ENCODE measurements at regions of chr7 and their contacts with region 1.

Region 1: GRCh38 chr7:7103343-7104313 is 78.7 kb upstream of the C1GALT1 start:
- DNase-seq: no peak
- ATAC-seq: peak in 3 of 4 donors; percentile 53 to 66 (median 60)
- H3K4me3 ChIP-seq: peak overlapping the region in 2 of 12 donors; percentile 19 to 40
- H3K27ac ChIP-seq: peak overlapping the region in 1 of 12 donors; percentile 10
- H3K4me1 ChIP-seq: peaks cover 0 to 22% (median 14%) of the 10 kb centered on the region in 12 donors
- H3K27me3 ChIP-seq: no peaks in the 10 kb centered on the region
- CTCF ChIP-seq: peak; percentile 59 to 77 (median 70)
- POLR2A ChIP-seq: no peak

Region 2: DNA sequence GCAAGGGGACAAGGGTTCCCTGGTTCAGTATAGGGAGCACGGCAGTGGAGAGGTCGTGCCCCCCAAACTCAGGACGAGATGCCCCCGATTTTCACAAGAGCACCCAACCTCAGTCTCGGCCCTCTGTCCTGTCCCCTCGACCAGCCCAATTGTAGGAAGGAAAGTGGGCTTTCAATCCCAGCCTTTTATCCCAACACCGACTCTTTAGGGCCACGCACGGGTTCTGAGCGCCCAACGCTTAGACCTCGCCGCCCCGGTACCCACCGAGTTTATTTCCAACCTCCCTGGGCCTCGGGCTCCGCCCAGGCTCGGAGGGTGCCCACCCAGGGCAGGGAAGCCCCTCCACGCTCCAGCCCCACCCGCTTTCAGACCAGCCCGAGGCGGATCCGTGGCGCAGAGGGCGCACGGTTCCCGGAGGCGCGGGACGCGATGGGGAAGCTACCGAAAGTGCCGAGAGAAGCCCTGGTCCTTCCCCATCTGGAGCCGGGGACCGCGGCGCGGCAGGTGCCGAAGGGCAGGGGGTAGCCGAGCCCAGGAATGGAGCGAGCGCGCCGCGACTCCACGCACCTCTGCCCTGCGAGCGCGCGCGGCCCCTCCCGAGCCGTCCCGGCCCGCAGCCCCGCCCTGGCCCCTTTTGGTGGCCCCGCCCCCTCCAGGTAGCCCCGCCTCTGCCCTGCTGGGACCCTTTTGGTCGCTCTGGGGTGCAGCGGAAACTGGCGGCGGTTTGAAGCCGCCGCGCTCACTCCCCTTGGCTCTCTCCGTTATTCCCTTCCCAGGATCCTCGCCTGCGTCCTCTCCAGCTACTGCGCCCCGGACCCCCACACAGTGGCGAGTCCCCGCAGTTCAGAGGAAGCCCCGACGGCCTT is 572.8 kb before region 1 on chr7:
- intact Hi-C with region 1: no loop called
- DNase-seq: no peak
- ATAC-seq: peak in 1 of 4 donors; percentile 14
- H3K4me3 ChIP-seq: peak overlapping the region in 9 of 12 donors; percentile 21 to 43 (median 32)
- H3K27ac ChIP-seq: no peak overlapping the region
- H3K4me1 ChIP-seq: peaks cover 0 to 21% (median 0%) of the 10 kb centered on the region in 12 donors
- H3K27me3 ChIP-seq: peaks cover 19 to 77% (median 53%) of the 10 kb centered on the region in 9 donors
- CTCF ChIP-seq: no peak
- POLR2A ChIP-seq: no peak

Region 3: GRCh38 chr7:7176421-7177043 is 72.9 kb after region 1 on chr7:
- intact Hi-C with region 1: loop called in 5 of 10 experiments (anchors 5 to 10 kb)
- DNase-seq: no peak
- ATAC-seq: peak in 3 of 4 donors; percentile 71 to 79 (median 71)
- H3K4me3 ChIP-seq: no peak overlapping the region
- H3K27ac ChIP-seq: peak overlapping the region in 1 of 12 donors; percentile 53
- H3K4me1 ChIP-seq: peaks cover 0 to 23% (median 4%) of the 10 kb centered on the region in 12 donors
- H3K27me3 ChIP-seq: no peaks in the 10 kb centered on the region
- CTCF ChIP-seq: no peak
- POLR2A ChIP-seq: no peak

Region 4: DNA sequence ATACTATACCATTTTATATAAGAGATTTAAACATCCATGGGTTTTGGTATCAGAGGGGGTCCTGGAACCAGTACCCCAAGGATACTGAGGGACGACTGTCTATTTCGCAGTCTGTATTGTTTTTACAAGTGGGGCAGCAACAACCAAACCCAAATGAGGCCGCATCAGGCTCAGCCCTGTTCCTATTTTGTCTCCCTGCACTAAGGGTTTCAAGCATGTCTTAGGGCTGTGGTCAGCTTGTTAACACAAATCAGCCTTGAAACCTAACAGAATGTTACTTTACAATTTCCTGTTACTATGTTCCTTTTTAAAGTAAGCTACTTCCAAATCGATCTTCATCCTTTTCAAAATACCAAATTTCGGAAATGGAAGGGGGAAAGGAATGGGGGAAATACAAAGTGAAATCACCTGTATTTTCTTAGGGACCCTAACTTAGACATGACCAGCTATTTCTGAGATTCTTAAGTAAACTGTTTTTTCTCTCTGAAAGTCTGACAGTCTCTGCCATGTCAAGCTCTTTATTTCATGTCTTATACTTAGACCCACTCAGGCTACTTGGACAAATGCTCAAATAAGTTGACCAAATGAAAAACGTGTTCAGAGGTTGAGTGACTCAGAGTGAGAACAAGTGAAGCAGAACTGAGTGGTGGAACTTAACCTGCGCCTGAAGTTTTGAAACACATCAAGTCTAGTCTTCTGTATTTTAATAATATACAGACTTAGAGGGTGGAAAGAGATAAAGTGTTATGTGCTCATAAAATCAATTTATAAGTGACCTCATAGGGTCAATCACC is 154.5 kb after region 1 on chr7:
- intact Hi-C with region 1: loop called in 1 of 10 experiments (anchors 5 kb)
- DNase-seq: no peak
- ATAC-seq: peak in 1 of 4 donors; percentile 37
- H3K4me3 ChIP-seq: peak overlapping the region in 1 of 12 donors; percentile 45
- H3K27ac ChIP-seq: peak overlapping the region in 1 of 12 donors; percentile 87
- H3K4me1 ChIP-seq: peaks cover 0 to 39% (median 5%) of the 10 kb centered on the region in 12 donors
- H3K27me3 ChIP-seq: no peaks in the 10 kb centered on the region
- CTCF ChIP-seq: no peak
- POLR2A ChIP-seq: no peak

Region 5: GRCh38 chr7:7424151-7424873 is 320.7 kb after region 1 on chr7:
- intact Hi-C with region 1: loop called in 7 of 10 experiments (anchors 5 to 10 kb)
- DNase-seq: peak; percentile 41 to 58 (median 55)
- ATAC-seq: peak; percentile 58 to 94 (median 86)
- H3K4me3 ChIP-seq: peak overlapping the region; percentile 14 to 65 (median 50)
- H3K27ac ChIP-seq: peak overlapping the region in 1 of 12 donors; percentile 11
- H3K4me1 ChIP-seq: peaks cover 0 to 11% (median 0%) of the 10 kb centered on the region in 12 donors
- H3K27me3 ChIP-seq: no peaks in the 10 kb centered on the region
- CTCF ChIP-seq: peak; percentile 52 to 82 (median 70)
- POLR2A ChIP-seq: no peak

Region 6: GRCh38 chr7:7542251-7542835 is 438.7 kb after region 1 on chr7:
- intact Hi-C with region 1: loop called (anchors 2 to 5 kb)
- DNase-seq: no peak
- ATAC-seq: no peak
- H3K4me3 ChIP-seq: no peak overlapping the region
- H3K27ac ChIP-seq: no peak overlapping the region
- H3K4me1 ChIP-seq: no peaks in the 10 kb centered on the region
- H3K27me3 ChIP-seq: no peaks in the 10 kb centered on the region
- CTCF ChIP-seq: no peak
- POLR2A ChIP-seq: no peak